Posterior vena cava (tissue), 2 donors: ENCODE measurements at regions of chr22 and their contacts with region 1.

Region 1: DNA sequence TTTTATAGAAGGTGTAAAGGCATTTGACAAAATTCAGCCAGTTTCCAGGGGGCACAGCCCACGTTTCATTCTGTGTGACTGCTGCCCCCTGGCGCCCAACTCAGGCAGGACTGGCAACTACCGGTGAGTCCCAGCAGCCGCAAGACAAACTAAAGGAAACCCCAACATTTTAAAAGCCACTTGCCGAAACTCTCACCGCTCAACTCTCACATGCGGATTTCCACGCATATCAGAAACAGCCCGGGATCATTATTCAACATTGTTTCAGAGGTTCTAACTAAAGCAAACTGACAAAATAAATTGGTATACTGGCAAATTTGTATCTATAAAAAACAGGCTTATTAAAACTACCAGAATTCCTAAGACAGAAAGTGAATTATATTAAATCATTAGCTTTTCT is 48.2 kb downstream of the MORC2 start:
- DNase-seq: peak; percentile 92

Region 2: DNA sequence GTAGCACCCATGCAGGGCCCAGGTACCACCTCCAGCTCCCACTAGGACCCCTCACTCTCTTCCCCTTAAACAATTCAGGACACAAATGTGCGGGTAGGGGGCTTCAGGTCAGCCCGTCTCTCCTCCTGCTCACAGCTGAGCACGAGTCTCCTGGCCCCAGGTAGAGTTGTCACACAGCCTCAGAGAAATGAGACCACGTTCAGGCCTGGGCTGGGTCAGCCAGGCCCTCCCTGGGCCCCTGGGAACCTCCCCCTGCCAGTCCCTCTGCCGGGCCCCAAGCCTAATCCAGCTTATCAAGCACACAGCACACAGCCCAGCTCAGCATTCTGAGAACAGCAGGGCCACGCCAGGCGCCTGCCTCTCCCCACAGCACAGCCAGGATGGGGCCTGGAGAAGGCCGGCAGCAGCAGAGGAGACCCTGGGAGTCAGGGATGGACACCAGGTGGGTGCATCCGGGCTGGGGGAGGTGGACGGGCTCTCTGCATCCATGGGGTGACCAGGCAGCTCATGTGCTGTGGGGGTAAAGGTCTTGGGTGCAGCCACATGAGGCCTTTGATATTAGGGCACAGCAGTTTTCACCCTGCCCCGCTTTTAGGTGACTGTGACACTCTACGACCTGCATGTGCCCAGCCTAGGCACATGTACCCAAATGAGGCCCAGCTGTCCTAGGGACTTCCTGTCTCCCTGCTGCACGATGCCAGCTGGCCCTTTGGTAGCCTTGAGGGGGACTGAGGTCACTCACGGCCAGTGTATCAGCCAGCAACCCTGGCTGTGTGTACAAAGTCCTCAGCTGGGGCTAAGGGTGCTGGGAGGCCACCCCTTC is 38.8 kb before region 1 on chr22:
- intact Hi-C with region 1: no loop called
- DNase-seq: peak; percentile 56

Region 3: DNA sequence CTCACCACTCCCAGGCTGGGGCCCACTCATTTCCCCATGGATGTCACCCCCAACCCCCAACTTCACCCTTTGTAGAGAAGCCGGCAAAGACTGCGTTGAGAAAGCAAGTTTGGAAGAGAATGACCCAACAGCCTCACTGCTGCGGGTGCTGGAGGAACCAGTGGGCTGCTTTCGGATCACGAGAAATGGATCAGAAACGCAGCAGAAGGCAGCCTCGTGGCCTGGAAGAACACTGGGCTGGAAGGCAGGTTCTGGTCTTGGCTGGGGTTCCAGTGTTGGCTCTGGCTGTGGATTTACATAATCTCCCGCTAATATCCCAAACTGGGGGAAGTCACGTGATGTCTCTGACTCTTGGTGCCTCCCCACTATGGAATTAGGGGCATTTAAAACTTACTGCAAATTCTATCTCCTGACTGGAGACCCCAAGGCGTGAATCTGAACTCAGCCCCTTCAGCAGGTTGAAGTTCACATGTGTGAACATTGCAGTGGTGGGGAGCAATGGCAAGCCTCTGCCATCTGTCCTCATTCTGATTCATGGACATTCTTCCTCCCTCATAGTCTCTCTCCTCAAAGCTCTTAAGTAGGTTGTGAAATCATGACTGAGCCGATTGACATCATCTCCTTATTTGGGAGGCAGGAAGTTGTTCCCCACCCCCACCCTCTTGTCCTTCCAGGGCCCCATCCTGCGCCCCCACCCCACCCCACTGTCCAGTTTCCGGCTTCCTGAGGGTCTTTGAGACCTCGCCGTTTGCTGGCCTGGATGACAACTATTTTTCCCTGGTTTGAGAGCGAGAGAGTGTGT is 1844.1 kb after region 1 on chr22:
- intact Hi-C with region 1: loop called in 1 of 2 experiments (anchors 10 kb)
- DNase-seq: peak; percentile 88